Transverse colon (tissue), 4 donors: ENCODE measurements at regions of chr6 and their contacts with region 1.

Region 1: DNA sequence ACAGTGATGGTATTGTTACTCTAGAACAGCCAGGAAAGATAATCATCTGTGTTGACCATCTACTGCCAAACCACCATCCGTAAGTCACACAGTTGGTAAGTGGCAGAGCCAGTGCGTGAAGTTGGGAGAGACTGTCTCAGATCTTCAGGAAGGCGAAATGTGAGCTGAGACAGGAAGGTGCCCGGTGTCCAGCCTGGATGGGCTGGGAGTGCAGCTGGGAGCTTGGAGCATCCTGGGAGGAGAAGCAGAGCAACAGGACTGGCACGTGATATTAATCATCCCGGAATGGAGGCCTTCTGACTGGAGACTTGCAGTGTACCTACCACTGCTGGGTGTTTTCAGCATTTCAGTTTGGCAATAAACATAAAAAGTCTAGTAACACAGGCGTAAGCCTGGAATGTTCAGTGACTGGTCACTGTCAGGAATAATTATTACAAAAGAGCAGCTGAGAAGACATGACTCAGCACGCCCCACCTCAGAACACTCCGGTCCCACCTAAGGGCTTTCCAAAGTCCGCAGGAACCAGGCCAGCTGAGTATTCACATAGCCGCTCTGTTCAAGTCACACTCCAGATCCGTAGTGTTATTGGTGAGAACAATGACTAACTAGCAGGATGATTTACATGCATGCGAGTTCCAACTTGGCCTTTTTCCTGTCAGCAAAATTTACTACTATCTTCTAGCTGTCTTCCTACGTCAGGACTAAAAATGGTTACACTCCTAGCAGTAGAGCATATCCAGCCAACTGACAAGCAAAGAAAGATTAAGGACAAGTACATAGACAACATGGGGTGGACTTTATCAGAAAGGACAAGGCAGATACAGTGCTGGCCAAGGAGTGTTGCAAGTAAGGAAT is 45.1 kb upstream of the PNRC1 start:
- DNase-seq: peak; percentile 91
- H3K4me3 ChIP-seq: peak overlapping the region in 1 of 4 donors; percentile 24
- H3K27ac ChIP-seq: peak overlapping the region; percentile 85 to 90 (median 88)
- H3K4me1 ChIP-seq: peaks cover 12 to 41% (median 19%) of the 10 kb centered on the region in 4 donors
- H3K27me3 ChIP-seq: no peaks in the 10 kb centered on the region
- CTCF ChIP-seq: peak in 1 of 5 experiments; percentile 30
- EP300 ChIP-seq: peak; percentile 99
- POLR2A ChIP-seq: peak; percentile 45

Region 2: GRCh38 chr6:89058627-89059026 is 23.1 kb after region 1 on chr6:
- in situ Hi-C with region 1: no loop called
- intact Hi-C with region 1: no loop called
- DNase-seq: no peak
- H3K4me3 ChIP-seq: no peak overlapping the region
- H3K27ac ChIP-seq: no peak overlapping the region
- H3K4me1 ChIP-seq: no peaks in the 10 kb centered on the region
- H3K27me3 ChIP-seq: no peaks in the 10 kb centered on the region
- CTCF ChIP-seq: no peak
- EP300 ChIP-seq: no peak
- POLR2A ChIP-seq: no peak

Region 3: DNA sequence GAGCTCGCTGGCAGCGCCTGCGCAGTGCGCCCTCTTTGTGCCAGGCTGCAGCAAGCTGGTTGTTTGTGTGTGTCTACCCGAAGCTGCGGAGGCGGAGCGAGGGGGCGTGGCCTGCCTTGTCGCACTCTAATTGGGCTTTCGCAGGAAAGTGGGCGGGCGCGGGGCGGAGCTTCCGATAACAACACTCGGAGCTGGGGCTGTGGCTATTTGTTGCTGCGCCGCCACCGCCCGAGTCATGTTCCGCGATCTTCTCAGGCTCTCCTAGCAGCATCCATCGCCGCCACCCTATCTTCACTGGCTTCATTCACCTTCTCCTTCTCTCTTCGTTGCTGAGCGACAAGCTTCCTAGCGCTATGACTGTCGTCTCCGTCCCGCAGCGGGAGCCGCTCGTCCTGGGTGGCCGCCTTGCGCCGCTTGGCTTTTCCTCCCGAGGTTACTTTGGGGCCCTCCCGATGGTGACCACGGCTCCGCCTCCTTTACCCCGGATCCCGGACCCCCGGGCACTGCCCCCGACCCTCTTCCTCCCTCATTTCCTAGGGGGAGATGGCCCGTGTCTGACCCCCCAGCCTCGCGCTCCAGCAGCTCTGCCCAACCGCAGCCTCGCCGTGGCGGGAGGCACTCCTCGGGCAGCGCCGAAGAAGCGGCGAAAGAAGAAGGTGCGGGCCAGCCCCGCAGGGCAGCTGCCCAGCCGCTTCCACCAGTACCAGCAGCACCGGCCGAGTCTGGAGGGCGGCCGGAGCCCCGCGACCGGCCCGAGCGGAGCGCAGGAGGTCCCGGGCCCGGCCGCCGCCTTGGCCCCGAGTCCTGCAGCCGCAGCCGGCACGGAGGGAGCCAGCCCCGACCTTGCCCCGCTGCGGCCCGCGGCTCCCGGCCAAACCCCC is 45.3 kb after region 1 on chr6 and contains the start of gene PNRC1:
- in situ Hi-C with region 1: no loop called
- intact Hi-C with region 1: loop called (anchors 5 kb)
- DNase-seq: peak; percentile 100
- H3K4me3 ChIP-seq: peak within 1 kb of the TSS; percentile 85 to 99 (median 96)
- H3K27ac ChIP-seq: peak within 1 kb of the TSS; percentile 100
- H3K4me1 ChIP-seq: peaks cover 6 to 38% (median 18%) of the 10 kb centered on the region in 4 donors
- H3K27me3 ChIP-seq: no peaks in the 10 kb centered on the region
- CTCF ChIP-seq: peak in 1 of 5 experiments; percentile 8
- EP300 ChIP-seq: no peak
- POLR2A ChIP-seq: peak; percentile 100
- total RNA-seq, gene PNRC1: 99.1 to 281 (median 157) TPM

Region 4: DNA sequence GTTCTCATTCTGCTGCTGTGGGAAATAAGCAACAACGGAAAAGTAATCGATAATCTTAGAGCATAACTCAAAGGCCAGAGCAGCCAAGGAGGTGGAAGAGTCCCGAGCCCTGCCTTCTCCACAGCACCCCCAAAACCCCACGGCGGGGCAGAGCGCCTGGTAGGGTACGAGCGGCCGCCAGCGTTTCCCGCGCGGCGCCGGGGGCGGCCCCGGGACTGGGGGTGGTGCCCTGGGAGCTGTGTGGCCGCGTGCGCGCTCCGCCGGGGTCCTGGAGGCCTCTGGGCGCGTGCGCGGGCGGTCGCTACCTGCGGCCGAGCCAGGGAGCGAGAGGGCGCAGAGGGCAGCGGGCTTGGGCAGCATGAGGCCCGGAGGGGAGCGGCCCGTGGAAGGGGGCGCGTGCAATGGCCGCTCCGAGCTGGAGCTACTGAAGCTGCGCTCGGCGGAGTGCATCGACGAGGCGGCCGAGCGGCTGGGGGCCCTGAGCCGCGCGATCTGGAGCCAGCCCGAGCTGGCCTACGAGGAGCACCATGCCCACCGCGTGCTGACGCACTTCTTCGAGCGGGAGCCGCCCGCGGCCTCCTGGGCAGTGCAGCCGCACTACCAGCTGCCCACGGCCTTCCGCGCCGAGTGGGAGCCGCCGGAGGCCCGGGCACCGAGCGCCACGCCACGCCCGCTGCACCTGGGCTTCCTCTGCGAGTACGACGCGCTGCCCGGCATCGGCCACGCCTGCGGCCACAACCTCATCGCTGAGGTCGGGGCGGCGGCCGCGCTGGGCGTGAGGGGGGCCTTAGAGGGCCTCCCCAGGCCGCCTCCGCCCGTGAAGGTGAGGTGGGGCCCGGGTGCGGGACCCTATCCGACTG is 110.5 kb after region 1 on chr6 and contains the start of gene PM20D2:
- in situ Hi-C with region 1: no loop called
- intact Hi-C with region 1: loop called (anchors 5 kb)
- DNase-seq: peak; percentile 77
- H3K4me3 ChIP-seq: peak within 1 kb of the TSS; percentile 76 to 84 (median 78)
- H3K27ac ChIP-seq: peak within 1 kb of the TSS; percentile 90 to 95 (median 94)
- H3K4me1 ChIP-seq: peaks cover 0 to 24% (median 10%) of the 10 kb centered on the region in 4 donors
- H3K27me3 ChIP-seq: no peaks in the 10 kb centered on the region
- CTCF ChIP-seq: no peak
- EP300 ChIP-seq: no peak
- POLR2A ChIP-seq: peak; percentile 51
- total RNA-seq, gene PM20D2: 3.7 to 16.4 (median 12.4) TPM

Region 5: GRCh38 chr6:89352278-89353117 is 317.0 kb after region 1 on chr6 and contains the start of gene UBE2J1:
- in situ Hi-C with region 1: no loop called
- intact Hi-C with region 1: no loop called
- DNase-seq: peak; percentile 96
- H3K4me3 ChIP-seq: peak within 1 kb of the TSS; percentile 68 to 88 (median 86)
- H3K27ac ChIP-seq: peak within 1 kb of the TSS; percentile 96 to 99 (median 99)
- H3K4me1 ChIP-seq: peaks cover 4 to 50% (median 29%) of the 10 kb centered on the region in 4 donors
- H3K27me3 ChIP-seq: no peaks in the 10 kb centered on the region
- CTCF ChIP-seq: no peak
- EP300 ChIP-seq: peak; percentile 38
- POLR2A ChIP-seq: peak; percentile 96
- total RNA-seq, gene UBE2J1: 27.3 to 52.9 (median 38.2) TPM